B cell (primary cell): ENCODE measurements at regions of chr10 and their contacts with region 1.

Region 1: DNA sequence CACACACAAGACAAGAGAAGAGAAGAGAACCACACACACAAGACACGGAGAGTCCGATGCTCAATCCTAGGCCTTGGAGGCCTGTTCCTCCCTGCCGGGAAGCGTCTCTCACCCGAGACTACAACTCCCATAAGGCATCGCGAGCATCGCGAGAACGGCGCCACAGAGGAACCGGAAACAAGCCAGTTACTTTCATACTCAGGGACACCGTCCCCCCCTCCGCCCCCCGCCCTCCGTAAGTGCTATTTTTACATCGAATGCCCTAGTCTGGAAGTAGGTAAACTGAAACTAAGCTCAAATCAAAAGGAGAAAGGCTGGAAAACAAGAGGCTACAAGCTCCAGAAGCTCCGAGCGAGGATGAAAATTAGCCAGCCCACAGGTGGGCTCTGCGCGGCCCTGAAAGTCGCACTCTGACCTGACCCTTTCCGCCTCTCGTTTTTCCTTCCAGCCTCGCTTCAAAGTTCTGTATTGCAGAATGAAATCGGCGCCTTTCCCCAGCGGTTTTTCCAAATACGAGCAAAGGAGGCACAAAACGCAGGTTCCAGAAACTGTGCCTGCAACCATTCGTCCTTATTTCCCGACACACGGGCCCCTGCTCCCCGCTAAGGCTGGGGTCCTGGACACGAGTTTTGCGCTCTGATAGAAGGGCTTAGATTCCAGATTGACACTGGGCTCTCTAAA is 11.5 kb upstream of the DNAJC12 start:
- DNase-seq: peak; percentile 93
- ATAC-seq: peak; percentile 99
- H3K4me3 ChIP-seq: peak overlapping the region; percentile 79 to 98 (median 96)
- H3K4me3 Mint-ChIP-seq: peak overlapping the region; percentile 97
- H3K27ac ChIP-seq: peak overlapping the region; percentile 89 to 91
- H3K27ac Mint-ChIP-seq: peak overlapping the region; percentile 97
- H3K4me1 ChIP-seq: peaks cover 5 to 9% of the 10 kb centered on the region in 2 donors
- H3K4me1 Mint-ChIP-seq: peaks cover 8% of the 10 kb centered on the region
- H3K27me3 ChIP-seq: no peaks in the 10 kb centered on the region
- H3K27me3 Mint-ChIP-seq: no peaks in the 10 kb centered on the region
- CTCF ChIP-seq: no peak

Region 2: DNA sequence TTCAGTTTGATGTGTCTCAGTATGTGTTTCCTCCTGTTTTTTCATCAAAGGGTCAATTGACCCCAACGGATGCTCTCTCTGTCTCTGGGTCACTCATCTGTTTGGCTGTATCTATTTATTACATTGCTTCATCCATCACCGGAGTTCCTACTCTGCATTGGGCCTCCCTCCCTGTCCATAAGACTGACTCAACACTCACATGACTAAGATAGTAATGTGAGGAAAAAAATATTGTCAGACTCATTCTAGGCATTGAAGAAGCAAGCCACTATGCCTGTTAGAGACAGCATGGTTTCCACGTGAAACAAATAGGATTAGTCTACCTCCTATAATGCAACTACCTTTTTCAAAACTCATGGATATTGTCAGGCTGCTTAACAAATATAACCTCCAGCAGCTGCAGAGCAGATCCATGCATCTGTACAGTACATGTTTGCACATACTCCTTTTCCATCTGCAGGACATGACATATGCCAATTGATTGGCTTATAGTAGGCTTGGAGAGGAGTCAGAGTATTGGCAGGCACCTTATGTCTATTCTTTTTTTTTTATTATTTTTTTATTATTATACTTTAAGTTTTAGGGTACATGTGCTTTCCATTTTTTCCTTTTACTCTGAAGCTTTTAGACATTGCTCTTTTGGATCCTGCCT is 648.4 kb before region 1 on chr10:
- CTCF ChIA-PET with region 1: no interaction called
- POLR2A ChIA-PET with region 1: no interaction called
- intact Hi-C with region 1: no loop called
- DNase-seq: no peak
- ATAC-seq: no peak
- H3K4me3 ChIP-seq: no peak overlapping the region
- H3K4me3 Mint-ChIP-seq: no peak overlapping the region
- H3K27ac ChIP-seq: no peak overlapping the region
- H3K27ac Mint-ChIP-seq: no peak overlapping the region
- H3K4me1 ChIP-seq: no peaks in the 10 kb centered on the region
- H3K4me1 Mint-ChIP-seq: no peaks in the 10 kb centered on the region
- H3K27me3 ChIP-seq: no peaks in the 10 kb centered on the region
- H3K27me3 Mint-ChIP-seq: no peaks in the 10 kb centered on the region
- CTCF ChIP-seq: no peak

Region 3: GRCh38 chr10:67602268-67602950 is 247.1 kb before region 1 on chr10:
- CTCF ChIA-PET with region 1: no interaction called
- POLR2A ChIA-PET with region 1: no interaction called
- intact Hi-C with region 1: no loop called
- DNase-seq: no peak
- ATAC-seq: no peak
- H3K4me3 ChIP-seq: no peak overlapping the region
- H3K4me3 Mint-ChIP-seq: no peak overlapping the region
- H3K27ac ChIP-seq: no peak overlapping the region
- H3K27ac Mint-ChIP-seq: no peak overlapping the region
- H3K4me1 ChIP-seq: no peaks in the 10 kb centered on the region
- H3K4me1 Mint-ChIP-seq: no peaks in the 10 kb centered on the region
- H3K27me3 ChIP-seq: peaks cover 0 to 3% (median 0%) of the 10 kb centered on the region in 4 experiments
- H3K27me3 Mint-ChIP-seq: peaks cover 6% of the 10 kb centered on the region
- CTCF ChIP-seq: no peak

Region 4: GRCh38 chr10:67837541-67838314 is 11.7 kb before region 1 on chr10 and contains the start of gene DNAJC12:
- CTCF ChIA-PET with region 1: no interaction called
- POLR2A ChIA-PET with region 1: no interaction called
- intact Hi-C with region 1: no loop called
- DNase-seq: no peak
- ATAC-seq: peak; percentile 63
- H3K4me3 ChIP-seq: no peak within 1 kb of the TSS
- H3K4me3 Mint-ChIP-seq: peak within 1 kb of the TSS; percentile 52
- H3K27ac ChIP-seq: no peak within 1 kb of the TSS
- H3K27ac Mint-ChIP-seq: no peak within 1 kb of the TSS
- H3K4me1 ChIP-seq: peaks cover 0 to 3% of the 10 kb centered on the region in 2 donors
- H3K4me1 Mint-ChIP-seq: peaks cover 3% of the 10 kb centered on the region
- H3K27me3 ChIP-seq: no peaks in the 10 kb centered on the region
- H3K27me3 Mint-ChIP-seq: no peaks in the 10 kb centered on the region
- CTCF ChIP-seq: no peak
- total RNA-seq, gene DNAJC12: not detected in 2 replicates

Region 5: GRCh38 chr10:68156373-68157185 is 307.1 kb after region 1 on chr10:
- CTCF ChIA-PET with region 1: interaction called, 192 read pairs
- POLR2A ChIA-PET with region 1: interaction called, 3 read pairs
- intact Hi-C with region 1: no loop called
- DNase-seq: peak; percentile 74
- ATAC-seq: no peak
- H3K4me3 ChIP-seq: no peak overlapping the region
- H3K4me3 Mint-ChIP-seq: no peak overlapping the region
- H3K27ac ChIP-seq: no peak overlapping the region
- H3K27ac Mint-ChIP-seq: no peak overlapping the region
- H3K4me1 ChIP-seq: no peaks in the 10 kb centered on the region
- H3K4me1 Mint-ChIP-seq: no peaks in the 10 kb centered on the region
- H3K27me3 ChIP-seq: no peaks in the 10 kb centered on the region
- H3K27me3 Mint-ChIP-seq: peaks cover 5% of the 10 kb centered on the region
- CTCF ChIP-seq: peak; percentile 90

Region 6: GRCh38 chr10:68348265-68348741 is 498.8 kb after region 1 on chr10:
- CTCF ChIA-PET with region 1: no interaction called
- POLR2A ChIA-PET with region 1: no interaction called
- intact Hi-C with region 1: loop called (anchors 2 kb)
- DNase-seq: peak; percentile 60
- ATAC-seq: peak; percentile 68
- H3K4me3 ChIP-seq: no peak overlapping the region
- H3K4me3 Mint-ChIP-seq: no peak overlapping the region
- H3K27ac ChIP-seq: peak overlapping the region in 1 of 2 donors; percentile 48
- H3K27ac Mint-ChIP-seq: peak overlapping the region; percentile 70
- H3K4me1 ChIP-seq: no peaks in the 10 kb centered on the region
- H3K4me1 Mint-ChIP-seq: no peaks in the 10 kb centered on the region
- H3K27me3 ChIP-seq: no peaks in the 10 kb centered on the region
- H3K27me3 Mint-ChIP-seq: no peaks in the 10 kb centered on the region
- CTCF ChIP-seq: peak; percentile 80